Dendritic cell treated with granulocyte-macrophage colony-stimulating factor and Interleukin-4, amounts not matched to agents 40 ng/mL and 50 ng/mL, for 4 days (primary cell): ENCODE measurements at regions of chr10 and their contacts with region 1.

Region 1: GRCh38 chr10:28302638-28303488 is at the start of gene MPP7:
- H3K4me3 Mint-ChIP-seq: peak within 1 kb of the TSS; percentile 84
- H3K27ac Mint-ChIP-seq: peak within 1 kb of the TSS; percentile 77
- H3K4me1 Mint-ChIP-seq: peaks cover 38% of the 10 kb centered on the region
- H3K27me3 Mint-ChIP-seq: no peaks in the 10 kb centered on the region

Region 2: GRCh38 chr10:28087661-28088351 is 215.1 kb before region 1 on chr10:
- intact Hi-C with region 1: no loop called
- H3K4me3 Mint-ChIP-seq: no peak overlapping the region
- H3K27ac Mint-ChIP-seq: no peak overlapping the region
- H3K4me1 Mint-ChIP-seq: peaks cover 11% of the 10 kb centered on the region
- H3K27me3 Mint-ChIP-seq: no peaks in the 10 kb centered on the region

Region 3: DNA sequence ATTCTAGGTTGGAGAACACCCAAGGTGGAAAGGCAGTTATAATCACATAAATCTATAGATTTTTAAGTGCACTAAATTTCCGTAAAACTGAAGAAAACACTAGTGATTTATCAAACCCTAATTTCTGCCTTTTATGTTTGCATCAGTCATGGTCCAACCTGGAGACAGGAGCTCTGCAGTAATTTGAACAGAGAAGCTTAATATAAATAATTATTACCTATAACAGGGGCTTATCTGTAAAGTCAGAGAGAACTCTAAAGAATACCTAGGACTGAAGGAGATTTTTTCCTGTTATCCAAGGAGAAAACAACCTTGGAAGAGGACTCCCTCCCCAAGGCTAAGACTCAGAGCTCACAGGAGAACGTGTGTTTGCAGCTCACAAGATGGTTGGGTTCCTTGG is 95.1 kb before region 1 on chr10:
- intact Hi-C with region 1: no loop called
- H3K4me3 Mint-ChIP-seq: no peak overlapping the region
- H3K27ac Mint-ChIP-seq: no peak overlapping the region
- H3K4me1 Mint-ChIP-seq: no peaks in the 10 kb centered on the region
- H3K27me3 Mint-ChIP-seq: no peaks in the 10 kb centered on the region

Region 4: DNA sequence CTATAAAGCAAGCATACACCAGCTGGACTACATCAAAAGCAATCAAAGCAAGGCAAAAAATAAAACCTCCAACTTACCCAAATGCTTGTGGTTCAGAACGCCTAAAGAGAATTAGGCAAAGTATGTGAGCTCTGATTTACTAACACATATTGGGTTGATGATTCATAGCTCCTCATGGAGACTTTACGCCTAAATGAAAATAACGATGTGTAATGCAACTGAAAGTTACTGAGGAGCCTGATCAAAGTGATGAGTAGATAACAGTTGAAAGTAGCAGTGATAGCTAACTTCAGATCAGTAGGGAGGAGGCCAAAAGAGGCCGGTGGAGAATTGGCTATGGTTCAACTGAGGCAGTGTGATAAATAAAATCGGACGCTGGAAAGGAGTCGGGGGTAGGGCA is 85.0 kb before region 1 on chr10:
- intact Hi-C with region 1: no loop called
- H3K4me3 Mint-ChIP-seq: no peak overlapping the region
- H3K27ac Mint-ChIP-seq: no peak overlapping the region
- H3K4me1 Mint-ChIP-seq: peaks cover 7% of the 10 kb centered on the region
- H3K27me3 Mint-ChIP-seq: no peaks in the 10 kb centered on the region

Region 5: DNA sequence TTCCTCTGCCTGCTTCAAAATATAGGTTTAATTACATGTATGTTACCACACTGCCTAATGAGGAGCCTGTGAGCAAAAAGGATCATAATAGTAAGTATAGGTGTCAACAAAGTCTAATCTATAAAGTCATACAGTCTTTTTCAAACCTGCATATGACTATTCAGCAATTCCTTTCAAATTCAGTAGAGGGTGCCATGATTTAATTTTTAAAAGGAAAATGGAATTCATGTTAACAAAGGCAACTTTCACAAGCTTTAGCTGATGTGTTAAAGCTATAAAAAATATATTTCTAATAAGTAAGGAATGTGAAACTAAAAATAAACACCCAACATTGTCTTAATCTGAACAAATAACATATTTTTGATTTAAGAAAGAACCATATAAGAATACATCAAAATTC is 52.1 kb before region 1 on chr10:
- intact Hi-C with region 1: loop called (anchors 2 kb)
- H3K4me3 Mint-ChIP-seq: no peak overlapping the region
- H3K27ac Mint-ChIP-seq: no peak overlapping the region
- H3K4me1 Mint-ChIP-seq: peaks cover 38% of the 10 kb centered on the region
- H3K27me3 Mint-ChIP-seq: no peaks in the 10 kb centered on the region

Region 6: DNA sequence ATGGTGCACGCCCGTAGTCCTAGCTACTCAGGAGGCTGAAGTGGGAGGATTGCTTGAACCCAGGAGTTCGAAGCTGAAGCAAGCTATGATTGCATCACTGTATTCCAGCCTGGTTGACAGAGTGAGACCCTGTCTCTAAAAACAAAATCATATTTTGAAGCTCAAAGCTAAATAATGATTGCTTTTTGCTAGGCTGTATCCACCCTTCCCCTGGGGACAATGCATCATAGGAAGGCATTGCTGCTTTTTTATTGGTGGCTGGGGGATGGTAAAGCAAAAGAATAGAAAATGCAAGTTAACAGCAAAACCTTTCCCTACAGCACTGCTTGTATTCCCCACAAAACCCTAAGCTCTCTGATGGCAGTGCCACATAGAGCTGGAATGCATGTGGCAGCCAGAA is 122.6 kb after region 1 on chr10:
- intact Hi-C with region 1: no loop called
- H3K4me3 Mint-ChIP-seq: no peak overlapping the region
- H3K27ac Mint-ChIP-seq: no peak overlapping the region
- H3K4me1 Mint-ChIP-seq: peaks cover 4% of the 10 kb centered on the region
- H3K27me3 Mint-ChIP-seq: peaks cover 3% of the 10 kb centered on the region